AG04450 (cell line): ENCODE measurements at regions of chr1 and their contacts with region 1.

Region 1: DNA sequence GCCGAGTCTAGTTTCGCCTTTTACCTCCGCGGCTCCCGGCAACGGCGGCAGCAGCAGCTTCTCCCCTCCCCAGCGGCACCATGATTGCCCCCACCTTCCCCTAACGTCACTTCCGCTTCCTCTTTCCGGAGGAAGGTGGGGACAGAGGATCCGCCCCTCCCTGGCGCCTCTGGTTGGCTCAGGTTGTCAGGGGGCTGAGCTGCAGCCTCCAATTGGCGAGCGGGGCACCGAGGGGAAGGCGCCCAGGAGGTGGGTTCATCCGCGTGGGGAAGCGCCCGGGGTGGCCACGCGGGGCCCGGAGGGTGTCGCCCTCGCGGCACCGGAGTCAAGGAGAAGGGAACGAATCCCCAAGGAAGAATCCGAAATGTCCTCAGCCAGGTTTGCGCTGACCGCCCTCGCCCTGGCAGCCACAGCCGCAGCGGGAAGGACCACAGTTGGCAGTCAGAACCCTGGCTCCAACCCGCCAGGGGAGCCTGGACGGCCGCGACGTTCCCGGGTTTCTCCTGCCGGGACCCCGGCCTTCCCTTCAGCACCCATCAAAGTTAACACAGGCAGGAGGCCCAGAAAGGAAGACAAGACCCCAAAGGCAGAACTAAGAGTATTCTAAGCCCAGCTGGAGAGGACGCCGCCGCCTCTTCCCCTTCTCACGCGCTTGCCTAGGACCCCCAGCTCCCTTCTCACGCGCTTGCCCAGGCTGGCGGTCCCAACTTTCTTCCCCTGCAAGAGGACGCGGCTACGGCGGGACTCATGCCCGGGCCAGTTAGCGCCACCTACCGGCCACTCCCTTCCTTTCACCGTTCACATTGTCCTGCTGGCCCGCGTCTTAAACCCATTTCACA is at the start of gene MTF1:
- DNase-seq: peak; percentile 87
- H3K4me3 ChIP-seq: peak within 1 kb of the TSS; percentile 100
- H3K27ac ChIP-seq: peak within 1 kb of the TSS; percentile 86
- H3K27me3 ChIP-seq: no peaks in the 10 kb centered on the region
- CTCF ChIP-seq: peak; percentile 89
- polyA plus RNA-seq, gene MTF1: 6.8 and 8.6 TPM in 2 replicates

Region 2: GRCh38 chr1:37692078-37692833 is 167.5 kb before region 1 on chr1 and contains the start of gene CDCA8:
- CTCF ChIA-PET with region 1: interaction called, 12 read pairs
- POLR2A ChIA-PET with region 1: no interaction called
- DNase-seq: peak; percentile 95
- H3K4me3 ChIP-seq: peak within 1 kb of the TSS; percentile 99
- H3K27ac ChIP-seq: peak within 1 kb of the TSS; percentile 39
- H3K27me3 ChIP-seq: no peaks in the 10 kb centered on the region
- CTCF ChIP-seq: peak; percentile 70
- polyA plus RNA-seq, gene CDCA8: 7.1 and 9.6 TPM in 2 replicates

Region 3: DNA sequence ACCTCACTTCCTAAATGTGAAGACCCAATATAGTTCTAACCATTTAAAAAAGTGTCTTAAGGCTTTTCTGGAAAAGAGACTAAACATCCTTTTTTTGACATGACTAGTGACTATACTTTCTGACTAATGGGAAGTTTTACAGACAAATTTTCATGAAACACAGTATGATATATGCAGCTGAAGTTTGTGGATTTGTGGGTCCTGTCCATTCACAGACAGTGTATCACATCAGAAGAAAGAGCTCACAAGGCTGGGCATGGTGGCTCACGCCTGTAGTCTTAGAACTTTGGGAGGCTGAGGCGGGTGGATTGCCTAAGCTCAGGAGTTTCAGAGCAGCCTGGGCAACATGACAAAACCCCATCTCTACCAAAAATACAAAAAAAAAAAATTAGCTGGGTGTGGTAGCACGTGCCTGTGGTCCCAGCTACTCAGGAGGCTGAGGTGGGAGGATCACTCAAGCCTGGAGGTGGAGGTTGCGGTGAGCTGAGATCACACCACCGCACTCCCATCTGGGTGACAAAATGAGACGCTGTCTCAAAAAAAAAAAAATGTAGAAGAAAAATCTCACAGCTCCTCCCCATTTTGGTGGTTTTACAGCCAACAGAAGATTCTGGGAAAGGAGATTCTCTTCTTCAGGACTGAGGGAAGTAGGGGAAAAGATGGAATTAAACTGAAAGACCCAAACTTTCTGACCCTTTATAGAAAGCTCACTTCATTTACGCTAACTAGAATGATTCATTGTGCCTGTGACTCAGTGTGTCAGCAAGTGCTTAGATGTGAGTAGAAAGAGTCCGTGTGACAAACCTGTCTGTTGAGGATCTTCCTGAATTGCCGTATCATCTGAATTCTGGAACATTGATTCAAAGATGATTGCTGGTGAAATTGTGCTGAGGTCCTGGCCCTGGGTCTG is 36.6 kb before region 1 on chr1:
- CTCF ChIA-PET with region 1: interaction called, 19 read pairs
- POLR2A ChIA-PET with region 1: interaction called, 3 read pairs
- DNase-seq: no peak
- H3K4me3 ChIP-seq: no peak overlapping the region
- H3K27ac ChIP-seq: no peak overlapping the region
- H3K27me3 ChIP-seq: no peaks in the 10 kb centered on the region
- CTCF ChIP-seq: no peak

Region 4: DNA sequence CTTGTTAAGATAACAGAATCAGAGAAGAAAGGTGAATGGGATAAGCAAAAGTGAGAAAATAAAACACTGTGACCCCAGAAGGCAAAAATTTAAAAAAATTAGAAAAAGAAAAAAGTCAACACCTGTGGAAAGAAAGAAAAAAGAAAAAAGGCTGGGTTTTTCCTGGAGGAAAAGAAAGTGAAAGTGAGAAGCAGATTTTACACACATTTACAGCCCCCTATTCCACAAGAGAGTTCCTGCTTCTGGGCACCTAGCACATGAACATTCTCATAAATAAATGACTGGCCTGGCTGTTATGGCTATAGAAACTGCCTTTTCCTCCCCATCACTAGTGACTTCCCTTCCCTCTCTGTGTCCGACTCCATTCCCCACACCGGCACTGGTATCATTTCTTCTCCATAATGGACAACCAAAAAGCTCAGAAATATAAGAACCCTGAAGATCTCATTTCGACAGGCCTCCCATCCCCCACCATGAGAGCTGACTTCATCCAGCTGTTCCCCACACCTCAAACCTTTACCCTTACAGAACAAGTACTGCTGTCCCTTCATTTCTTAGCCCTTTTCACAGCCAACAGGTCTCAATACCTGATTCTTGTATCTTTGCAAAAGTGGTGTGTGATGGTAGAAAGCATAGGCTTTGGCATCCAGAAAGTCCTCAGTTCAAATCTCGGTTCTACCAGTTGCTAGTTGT is 12.9 kb before region 1 on chr1:
- CTCF ChIA-PET with region 1: interaction called, 64 read pairs
- POLR2A ChIA-PET with region 1: interaction called, 3 read pairs
- DNase-seq: no peak
- H3K4me3 ChIP-seq: no peak overlapping the region
- H3K27ac ChIP-seq: no peak overlapping the region
- H3K27me3 ChIP-seq: no peaks in the 10 kb centered on the region
- CTCF ChIP-seq: no peak

Region 5: GRCh38 chr1:37890378-37891014 is 30.8 kb after region 1 on chr1:
- CTCF ChIA-PET with region 1: interaction called, 15 read pairs
- POLR2A ChIA-PET with region 1: no interaction called
- DNase-seq: no peak
- H3K4me3 ChIP-seq: no peak overlapping the region
- H3K27ac ChIP-seq: no peak overlapping the region
- H3K27me3 ChIP-seq: no peaks in the 10 kb centered on the region
- CTCF ChIP-seq: peak; percentile 46

Region 6: DNA sequence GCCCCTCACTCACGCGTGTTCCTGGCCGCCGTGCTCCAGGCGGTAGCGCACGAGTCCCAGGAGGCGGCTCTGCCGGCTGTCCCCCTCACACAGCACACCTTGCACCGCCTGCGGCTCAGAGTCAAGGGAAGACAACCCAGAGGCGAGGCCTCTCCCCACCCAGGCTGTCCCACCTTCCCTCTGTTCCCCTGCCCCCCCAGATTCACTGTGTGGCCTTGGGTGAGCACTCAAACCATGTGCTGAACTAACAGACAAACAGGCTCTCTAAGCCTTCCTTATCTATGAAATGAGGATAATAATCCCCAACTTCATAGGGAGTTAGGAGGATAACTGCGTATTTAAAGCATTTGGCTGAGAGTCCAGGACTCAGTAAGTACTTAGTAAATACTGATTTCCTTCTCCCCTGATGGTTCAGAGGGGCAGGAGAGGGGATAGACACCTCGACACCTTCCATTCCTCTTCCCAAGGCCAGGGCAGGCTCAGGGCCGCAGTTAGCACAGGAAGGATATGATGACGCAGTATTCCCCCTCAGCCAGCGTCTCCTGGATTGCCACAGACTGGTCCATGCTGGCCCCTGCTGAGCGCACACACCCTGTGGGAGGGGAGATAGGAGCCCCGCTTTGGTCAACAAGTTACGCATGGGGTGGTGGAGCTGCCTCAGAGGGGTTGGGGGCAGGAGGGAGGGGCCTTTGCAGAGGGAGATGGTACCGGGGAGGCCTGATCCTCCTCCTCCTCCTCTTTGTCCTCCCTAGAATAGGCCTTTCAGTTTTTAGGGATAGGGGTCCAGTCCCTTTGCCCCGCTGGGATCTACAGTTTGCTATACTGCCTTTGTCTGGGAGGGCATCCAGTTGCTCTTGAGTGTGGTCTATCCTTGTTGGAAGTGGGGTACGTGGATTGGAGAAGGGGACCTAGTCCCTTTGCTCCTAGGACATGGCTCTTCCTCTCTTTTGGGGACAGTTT is 86.3 kb after region 1 on chr1:
- CTCF ChIA-PET with region 1: interaction called, 11 read pairs
- POLR2A ChIA-PET with region 1: no interaction called
- DNase-seq: peak; percentile 75
- H3K4me3 ChIP-seq: peak overlapping the region; percentile 96
- H3K27ac ChIP-seq: peak overlapping the region; percentile 98
- H3K27me3 ChIP-seq: no peaks in the 10 kb centered on the region
- CTCF ChIP-seq: no peak